ENCODE measurements at regions of chr7 and their contacts with region 1.

Region 1: DNA sequence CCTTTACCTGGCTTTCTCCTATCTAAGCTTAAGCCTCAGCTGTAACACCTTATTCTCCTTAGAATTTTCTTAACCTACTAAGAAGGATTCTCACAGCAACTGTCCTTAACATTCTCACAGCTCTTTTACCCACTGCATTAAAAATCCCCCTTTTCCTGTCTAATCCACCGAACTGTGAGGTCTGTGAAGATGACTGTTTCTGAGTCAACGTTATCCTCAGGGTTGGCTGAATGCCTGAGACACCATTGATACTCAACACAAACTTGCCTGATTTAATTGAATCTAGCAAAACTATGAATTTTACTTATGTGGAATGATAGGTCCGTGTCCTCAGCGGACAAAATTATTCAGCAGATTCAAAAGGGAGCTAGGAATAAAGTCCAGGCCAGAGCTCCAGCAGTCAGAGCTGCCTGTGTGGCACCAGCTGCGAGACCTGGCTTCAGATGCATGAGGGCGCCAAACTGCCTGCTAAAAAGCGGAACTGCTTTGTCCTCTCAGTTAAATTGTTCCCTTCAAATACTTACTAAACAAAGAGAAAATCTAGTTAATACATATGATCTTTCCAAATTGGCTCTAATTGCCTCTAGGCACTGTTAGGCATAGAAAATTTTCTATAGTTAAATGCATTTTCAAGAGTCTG is 33.4 kb upstream of the VWDE start:
- DNase-seq: peak; percentile 68
- ATAC-seq: peak; percentile 70
- H3K4me3 ChIP-seq: no peak overlapping the region
- H3K27ac ChIP-seq: peak overlapping the region; percentile 78
- H3K4me1 ChIP-seq: peaks cover 14% of the 10 kb centered on the region
- H3K27me3 ChIP-seq: no peaks in the 10 kb centered on the region
- CTCF ChIP-seq: peak; percentile 55

Region 2: DNA sequence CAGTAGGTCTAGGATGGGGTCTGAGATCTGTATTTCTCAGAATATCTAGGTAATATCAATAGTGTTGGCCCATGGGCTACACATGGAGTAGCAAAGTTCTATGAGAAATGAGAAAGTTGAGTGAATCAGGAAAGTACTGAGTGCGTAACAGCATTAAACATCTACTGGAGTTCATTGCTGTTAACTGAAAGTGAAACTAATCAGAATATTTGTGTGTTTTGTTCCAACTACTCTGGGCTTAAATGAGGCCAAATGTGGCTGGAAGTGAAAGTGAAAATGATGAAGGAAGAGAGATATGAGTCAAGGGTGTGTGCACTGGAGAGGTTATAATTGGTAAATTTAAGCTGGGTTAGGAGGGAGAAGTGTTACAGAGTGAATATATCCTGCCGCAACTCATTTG is 179.4 kb before region 1 on chr7:
- CTCF ChIA-PET with region 1: no interaction called
- POLR2A ChIA-PET with region 1: no interaction called
- intact Hi-C with region 1: no loop called
- DNase-seq: peak; percentile 15
- ATAC-seq: peak; percentile 16; the same call in 1 of the 2 replicates
- H3K4me3 ChIP-seq: no peak overlapping the region
- H3K27ac ChIP-seq: no peak overlapping the region
- H3K4me1 ChIP-seq: peaks cover 12% of the 10 kb centered on the region; the same call in 1 of the 2 replicates
- H3K27me3 ChIP-seq: no peaks in the 10 kb centered on the region
- CTCF ChIP-seq: no peak

Region 3: GRCh38 chr7:12389089-12389700 is 47.8 kb before region 1 on chr7:
- CTCF ChIA-PET with region 1: no interaction called
- POLR2A ChIA-PET with region 1: no interaction called
- intact Hi-C with region 1: loop called (anchors 1 kb)
- DNase-seq: peak; percentile 77
- ATAC-seq: peak; percentile 89
- H3K4me3 ChIP-seq: no peak overlapping the region
- H3K27ac ChIP-seq: no peak overlapping the region
- H3K4me1 ChIP-seq: no peaks in the 10 kb centered on the region
- H3K27me3 ChIP-seq: no peaks in the 10 kb centered on the region
- CTCF ChIP-seq: peak; percentile 91

Region 4: GRCh38 chr7:12403287-12404181 is 33.5 kb before region 1 on chr7 and contains the start of gene VWDE:
- CTCF ChIA-PET with region 1: interaction called, 7 read pairs
- POLR2A ChIA-PET with region 1: interaction called, 3 read pairs
- intact Hi-C with region 1: loop called (anchors 1 kb)
- DNase-seq: peak; percentile 80
- ATAC-seq: peak; percentile 89
- H3K4me3 ChIP-seq: peak within 1 kb of the TSS; percentile 96
- H3K27ac ChIP-seq: peak within 1 kb of the TSS; percentile 65
- H3K4me1 ChIP-seq: peaks cover 24% of the 10 kb centered on the region
- H3K27me3 ChIP-seq: no peaks in the 10 kb centered on the region
- CTCF ChIP-seq: no peak
- total RNA-seq, gene VWDE: 5.5 and 7.7 TPM in 2 replicates

Region 5: DNA sequence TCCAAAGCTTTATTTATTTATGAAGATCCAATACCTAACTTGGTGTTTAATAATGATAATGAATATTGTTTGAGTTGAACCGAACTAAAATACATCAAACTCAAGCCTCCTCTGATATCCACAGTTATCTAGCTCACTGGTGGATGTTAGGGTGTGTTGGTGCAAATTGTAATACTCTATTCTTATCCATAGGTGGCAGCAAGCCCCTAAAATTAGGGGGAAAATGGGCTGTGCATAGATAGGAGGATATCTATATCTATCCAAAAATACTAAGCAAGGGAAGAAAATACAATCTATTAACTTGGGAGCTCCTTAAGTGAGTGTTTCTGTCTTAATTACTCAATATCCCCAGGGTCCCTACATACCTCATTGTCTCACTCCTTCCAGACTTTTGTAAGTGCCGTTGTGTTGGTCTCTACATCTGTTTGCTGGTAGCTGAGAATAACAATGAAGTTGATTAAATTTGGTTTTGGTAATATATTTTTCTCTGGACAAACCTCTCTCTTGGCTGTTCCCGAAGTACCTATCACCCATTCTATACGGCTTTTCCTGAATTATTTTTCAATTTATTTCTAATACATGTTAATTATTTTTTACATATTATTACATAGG is 21.6 kb after region 1 on chr7:
- CTCF ChIA-PET with region 1: interaction called, 11 read pairs
- POLR2A ChIA-PET with region 1: no interaction called
- intact Hi-C with region 1: no loop called
- DNase-seq: peak; percentile 77
- ATAC-seq: peak; percentile 100
- H3K4me3 ChIP-seq: no peak overlapping the region
- H3K27ac ChIP-seq: no peak overlapping the region
- H3K4me1 ChIP-seq: no peaks in the 10 kb centered on the region
- H3K27me3 ChIP-seq: no peaks in the 10 kb centered on the region
- CTCF ChIP-seq: peak; percentile 88